GM13977 (cell line): ENCODE measurements at regions of chr4 and their contacts with region 1.

Region 1: GRCh38 chr4:1130316-1131186 is 17.2 kb upstream of the RNF212 start:
- DNase-seq: peak; percentile 73
- CTCF ChIP-seq: peak; percentile 100

Region 2: DNA sequence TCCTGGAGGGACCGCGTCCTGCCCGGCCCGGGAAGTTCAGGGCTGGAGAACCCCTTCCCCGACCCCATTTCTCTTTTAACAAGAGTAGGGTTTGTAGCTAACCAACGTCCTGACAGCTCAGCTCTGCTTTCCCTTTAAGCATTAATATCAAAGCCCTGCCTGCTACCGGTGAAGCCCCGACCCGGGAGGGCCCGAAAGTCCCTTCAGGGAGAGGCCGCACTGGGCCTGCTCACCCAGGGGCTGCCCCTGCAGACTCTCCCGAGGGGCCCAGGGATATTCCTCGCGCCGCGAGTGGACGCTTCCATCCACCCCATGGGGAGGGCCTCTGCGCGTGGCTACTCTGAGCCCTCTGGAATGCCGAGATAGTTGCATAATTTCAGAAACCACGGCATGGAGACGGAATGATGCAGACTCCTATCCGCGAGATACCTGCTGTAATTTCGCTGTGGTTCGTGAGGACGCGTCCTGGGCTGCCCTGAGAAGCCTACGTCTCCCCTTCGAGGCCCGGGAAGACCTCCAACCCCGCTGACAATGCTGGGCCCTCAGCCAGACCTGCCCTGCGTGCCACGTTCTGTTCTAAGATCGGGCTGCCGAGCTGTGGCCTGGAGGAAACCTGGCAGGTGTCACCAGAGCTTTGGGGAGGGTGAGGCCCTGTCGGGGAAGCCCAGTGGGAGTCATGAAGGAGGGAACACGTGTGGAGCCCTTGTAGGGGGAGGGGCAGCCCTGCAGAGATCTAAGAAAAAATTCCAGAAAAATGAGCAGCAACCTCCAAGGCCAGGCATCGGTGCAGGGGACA is 119.4 kb after region 1 on chr4:
- in situ Hi-C with region 1: loop called (anchors 10 kb)
- DNase-seq: peak; percentile 85
- CTCF ChIP-seq: no peak

Region 3: GRCh38 chr4:1351854-1352633 is 221.5 kb after region 1 on chr4:
- in situ Hi-C with region 1: loop called (anchors 10 kb)
- DNase-seq: peak; percentile 83
- CTCF ChIP-seq: peak; percentile 89